Activated naive CD8-positive, alpha-beta T cell treated with anti-CD3 and anti-CD28 coated beads, Interleukin-2, amount 10 ng/mL, durations not matched to agents 7 days and 5 days (primary cell): ENCODE measurements at regions of chr11 and their contacts with region 1.

Region 1: GRCh38 chr11:47248664-47249377 is at the start of gene ACP2:
- DNase-seq: peak; percentile 89
- ATAC-seq: peak; percentile 97
- H3K4me3 Mint-ChIP-seq: peak within 1 kb of the TSS; percentile 98
- H3K27ac Mint-ChIP-seq: peak within 1 kb of the TSS; percentile 98
- H3K4me1 Mint-ChIP-seq: peaks cover 19% of the 10 kb centered on the region
- H3K27me3 Mint-ChIP-seq: no peaks in the 10 kb centered on the region
- total RNA-seq, gene ACP2: 26.5 to 31.1 TPM

Region 2: GRCh38 chr11:47233989-47234668 is 14.7 kb before region 1 on chr11:
- POLR2A ChIA-PET with region 1: interaction called, 38 read pairs
- DNase-seq: no peak
- ATAC-seq: peak; percentile 49
- H3K4me3 Mint-ChIP-seq: peak overlapping the region; percentile 55
- H3K27ac Mint-ChIP-seq: peak overlapping the region; percentile 76
- H3K4me1 Mint-ChIP-seq: peaks cover 28% of the 10 kb centered on the region
- H3K27me3 Mint-ChIP-seq: no peaks in the 10 kb centered on the region

Region 3: DNA sequence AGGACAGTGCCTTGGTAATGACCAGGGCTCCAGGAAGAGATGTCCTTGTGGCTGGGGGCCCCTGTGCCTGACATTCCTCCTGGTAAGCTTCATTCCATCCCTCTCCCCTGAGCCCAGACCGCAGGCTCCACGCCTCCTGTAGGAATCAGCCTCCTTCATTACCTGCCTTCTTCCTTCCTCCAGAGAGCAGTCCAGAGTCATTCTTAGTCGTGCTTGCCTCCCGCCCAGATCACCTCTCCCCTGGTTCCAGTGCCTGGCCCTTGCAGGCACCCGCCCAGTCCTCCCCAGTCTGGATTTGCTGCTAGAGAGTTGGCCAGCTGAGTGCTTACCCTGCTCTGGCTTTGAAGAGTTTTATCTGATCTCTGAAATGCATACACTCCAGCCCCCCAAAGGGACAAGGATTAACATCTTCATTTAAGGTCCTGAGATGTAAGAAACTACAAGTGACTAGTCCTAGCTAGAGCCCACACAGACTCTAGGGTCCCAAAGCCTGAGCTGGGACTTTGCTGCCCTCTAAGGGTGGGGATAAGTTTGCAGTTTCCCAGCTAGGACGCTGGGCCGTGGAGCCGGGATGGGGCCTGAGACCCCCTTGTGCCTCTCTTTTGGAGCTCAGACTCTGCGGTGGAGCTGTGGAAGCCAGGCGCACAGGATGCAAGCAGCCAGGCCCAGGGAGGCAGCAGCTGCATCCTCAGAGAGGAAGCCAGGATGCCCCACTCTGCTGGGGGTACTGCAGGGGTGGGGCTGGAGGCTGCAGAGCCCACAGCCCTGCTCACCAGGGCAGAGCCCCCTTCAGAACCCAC is 10.6 kb after region 1 on chr11:
- POLR2A ChIA-PET with region 1: interaction called, 38 read pairs
- DNase-seq: peak; percentile 52
- ATAC-seq: peak; percentile 83
- H3K4me3 Mint-ChIP-seq: no peak overlapping the region
- H3K27ac Mint-ChIP-seq: peak overlapping the region; percentile 79
- H3K4me1 Mint-ChIP-seq: peaks cover 23% of the 10 kb centered on the region
- H3K27me3 Mint-ChIP-seq: no peaks in the 10 kb centered on the region

Region 4: GRCh38 chr11:47269002-47269828 is 20.4 kb after region 1 on chr11:
- POLR2A ChIA-PET with region 1: interaction called, 36 read pairs
- DNase-seq: peak; percentile 91
- ATAC-seq: peak; percentile 46
- H3K4me3 Mint-ChIP-seq: peak overlapping the region; percentile 92
- H3K27ac Mint-ChIP-seq: peak overlapping the region; percentile 100
- H3K4me1 Mint-ChIP-seq: peaks cover 48% of the 10 kb centered on the region
- H3K27me3 Mint-ChIP-seq: no peaks in the 10 kb centered on the region

Region 5: GRCh38 chr11:47296045-47296444 is 47.2 kb after region 1 on chr11:
- POLR2A ChIA-PET with region 1: no interaction called
- DNase-seq: no peak
- ATAC-seq: no peak
- H3K4me3 Mint-ChIP-seq: no peak overlapping the region
- H3K27ac Mint-ChIP-seq: no peak overlapping the region
- H3K4me1 Mint-ChIP-seq: peaks cover 2% of the 10 kb centered on the region
- H3K27me3 Mint-ChIP-seq: no peaks in the 10 kb centered on the region